CD8-positive, alpha-beta T cell (primary cell): ENCODE measurements at regions of chr12 and their contacts with region 1.

Region 1: DNA sequence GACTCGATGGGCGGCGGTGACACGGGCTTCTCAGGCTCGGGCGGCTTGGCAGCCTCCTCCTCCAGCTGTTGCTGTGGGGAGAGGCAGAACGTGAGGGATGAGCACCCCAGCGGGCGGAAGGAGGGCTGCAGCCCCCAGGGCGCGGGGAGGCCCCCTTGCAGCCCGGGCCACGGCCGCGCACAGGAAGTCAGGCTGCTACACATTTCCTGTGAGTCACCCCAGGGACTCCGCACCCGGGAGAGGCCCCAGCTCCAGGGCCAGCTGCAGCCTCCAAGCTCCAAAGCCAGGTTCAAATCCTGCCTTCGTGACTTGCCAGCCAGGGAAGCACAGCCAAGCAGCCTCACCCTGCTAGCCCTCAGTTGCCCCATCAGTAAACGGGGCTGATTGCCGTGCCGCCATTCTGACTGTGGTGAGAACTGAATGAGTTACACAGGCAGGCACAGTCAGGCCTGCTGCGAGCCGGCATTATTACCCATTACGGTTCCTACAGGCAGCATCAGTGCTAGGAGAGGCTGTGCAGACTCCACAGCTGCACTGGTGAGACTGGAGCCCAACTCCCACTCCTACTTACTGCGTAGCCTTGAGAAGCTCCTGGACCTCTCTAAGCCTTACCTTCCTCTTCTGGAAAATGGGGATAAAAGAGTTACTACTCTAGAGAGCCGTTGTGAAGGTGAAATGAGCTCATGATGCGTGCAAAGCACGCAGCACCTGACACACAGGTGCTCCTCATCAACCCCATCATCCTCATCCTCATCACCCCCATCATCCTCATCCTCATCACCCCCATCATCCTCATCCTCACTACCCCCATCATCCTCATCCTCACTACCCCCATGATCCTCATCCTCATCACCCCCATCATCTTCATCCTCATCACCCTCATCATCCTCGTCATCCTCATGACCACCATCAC is 100.9 kb downstream of the NCOR2 start:
- DNase-seq: peak; percentile 81 to 96 (median 90)
- ATAC-seq: peak; percentile 95
- H3K4me3 ChIP-seq: peak overlapping the region; percentile 62 to 64
- H3K4me3 Mint-ChIP-seq: peak overlapping the region; percentile 78
- H3K27ac ChIP-seq: peak overlapping the region; percentile 49 to 85
- H3K27ac Mint-ChIP-seq: peak overlapping the region; percentile 91
- H3K4me1 ChIP-seq: peaks cover 25% of the 10 kb centered on the region
- H3K4me1 Mint-ChIP-seq: peaks cover 47% of the 10 kb centered on the region
- H3K27me3 ChIP-seq: no peaks in the 10 kb centered on the region
- H3K27me3 Mint-ChIP-seq: no peaks in the 10 kb centered on the region
- CTCF ChIP-seq: peak; percentile 68

Region 2: DNA sequence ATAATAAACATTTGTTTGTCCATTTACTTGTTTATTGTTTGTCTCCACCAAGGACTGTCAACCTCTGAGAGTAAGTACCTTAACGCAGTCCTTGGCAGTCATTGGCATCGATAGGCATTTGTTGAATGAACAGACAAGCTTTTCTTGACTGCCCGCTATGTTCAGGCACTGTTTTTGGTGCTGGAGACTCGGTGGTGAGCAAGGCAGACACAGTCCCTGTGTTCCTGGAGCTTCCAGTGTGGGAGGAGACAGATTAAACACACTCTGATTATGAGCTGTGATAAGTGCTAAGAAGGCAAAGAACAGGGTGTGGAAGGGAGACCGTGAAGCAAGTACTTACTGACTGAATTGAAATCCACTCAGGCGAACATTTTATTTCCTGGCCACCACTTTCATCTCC is 753.1 kb before region 1 on chr12:
- CTCF ChIA-PET with region 1: no interaction called
- POLR2A ChIA-PET with region 1: no interaction called
- intact Hi-C with region 1: loop called in 1 of 2 experiments (anchors 5 kb)
- DNase-seq: peak in 1 of 9 experiments; percentile 21
- ATAC-seq: no peak
- H3K4me3 ChIP-seq: peak overlapping the region; percentile 69 to 98
- H3K4me3 Mint-ChIP-seq: peak overlapping the region; percentile 84
- H3K27ac ChIP-seq: no peak overlapping the region
- H3K27ac Mint-ChIP-seq: peak overlapping the region; percentile 86
- H3K4me1 ChIP-seq: peaks cover 22% of the 10 kb centered on the region
- H3K4me1 Mint-ChIP-seq: peaks cover 45% of the 10 kb centered on the region
- H3K27me3 ChIP-seq: no peaks in the 10 kb centered on the region
- H3K27me3 Mint-ChIP-seq: no peaks in the 10 kb centered on the region
- CTCF ChIP-seq: no peak

Region 3: GRCh38 chr12:124036674-124037109 is 429.8 kb before region 1 on chr12:
- CTCF ChIA-PET with region 1: interaction called, 3 read pairs
- POLR2A ChIA-PET with region 1: no interaction called
- intact Hi-C with region 1: loop called in 1 of 2 experiments (anchors 2 kb)
- DNase-seq: peak in 7 of 9 experiments; percentile 20 to 69 (median 52)
- ATAC-seq: no peak
- H3K4me3 ChIP-seq: no peak overlapping the region
- H3K4me3 Mint-ChIP-seq: no peak overlapping the region
- H3K27ac ChIP-seq: no peak overlapping the region
- H3K27ac Mint-ChIP-seq: no peak overlapping the region
- H3K4me1 ChIP-seq: no peaks in the 10 kb centered on the region
- H3K4me1 Mint-ChIP-seq: no peaks in the 10 kb centered on the region
- H3K27me3 ChIP-seq: no peaks in the 10 kb centered on the region
- H3K27me3 Mint-ChIP-seq: no peaks in the 10 kb centered on the region
- CTCF ChIP-seq: peak; percentile 99

Region 4: GRCh38 chr12:124453419-124454351 is 12.8 kb before region 1 on chr12:
- CTCF ChIA-PET with region 1: interaction called, 26 read pairs
- POLR2A ChIA-PET with region 1: interaction called, 20 read pairs
- intact Hi-C with region 1: loop called (anchors 1 kb)
- DNase-seq: peak; percentile 64 to 95 (median 84)
- ATAC-seq: peak; percentile 78
- H3K4me3 ChIP-seq: peak overlapping the region; percentile 29 to 57
- H3K4me3 Mint-ChIP-seq: peak overlapping the region; percentile 67
- H3K27ac ChIP-seq: peak overlapping the region; percentile 41 to 92
- H3K27ac Mint-ChIP-seq: peak overlapping the region; percentile 82
- H3K4me1 ChIP-seq: peaks cover 82% of the 10 kb centered on the region
- H3K4me1 Mint-ChIP-seq: peaks cover 67% of the 10 kb centered on the region
- H3K27me3 ChIP-seq: no peaks in the 10 kb centered on the region
- H3K27me3 Mint-ChIP-seq: no peaks in the 10 kb centered on the region
- CTCF ChIP-seq: no peak

Region 5: DNA sequence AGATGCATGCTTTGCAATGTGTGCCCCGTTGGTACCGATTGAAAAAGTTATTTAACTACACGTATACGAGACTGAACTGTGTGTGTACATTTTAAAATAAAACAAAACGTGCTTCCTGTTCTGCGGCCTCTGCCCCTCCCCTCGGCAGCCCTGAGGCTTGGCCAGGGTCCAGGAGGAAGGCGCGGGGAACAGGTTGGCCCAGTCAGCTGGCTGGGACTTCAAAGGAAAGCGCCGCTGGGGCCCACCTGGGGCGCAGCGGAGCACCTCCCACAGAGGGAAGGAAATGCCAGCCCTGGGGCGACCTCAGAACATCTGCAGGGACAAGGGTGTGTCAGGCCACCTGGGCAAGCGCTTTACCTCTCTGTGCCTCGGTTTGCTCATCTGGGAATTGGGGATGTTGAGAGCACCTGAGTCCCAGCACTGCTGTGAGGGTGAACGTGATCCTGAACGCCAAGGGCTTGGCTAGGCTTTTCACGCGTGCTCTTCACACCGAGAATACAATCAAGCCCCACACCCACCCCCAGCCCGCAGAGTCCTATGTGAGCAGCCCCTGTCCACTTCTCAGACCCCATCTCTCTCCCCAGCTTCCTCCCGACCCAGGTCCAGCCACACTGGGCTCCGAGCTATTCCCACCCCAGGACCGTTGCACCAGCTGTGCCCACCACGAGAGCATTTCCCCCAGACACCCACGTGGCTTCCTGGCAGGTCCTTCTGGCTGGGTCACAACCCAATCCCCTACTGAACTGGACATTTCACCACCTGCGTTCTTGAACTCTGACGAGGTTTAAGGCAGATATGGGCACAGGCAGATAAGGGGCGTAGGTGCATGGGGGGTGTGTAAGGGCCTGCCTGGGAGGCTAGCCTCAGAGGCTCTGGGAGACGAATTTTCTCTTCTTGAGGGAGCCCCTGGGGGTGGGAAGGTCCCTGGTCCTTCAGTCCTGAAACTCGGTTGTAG is 142.8 kb after region 1 on chr12:
- CTCF ChIA-PET with region 1: interaction called, 3 read pairs
- POLR2A ChIA-PET with region 1: no interaction called
- intact Hi-C with region 1: loop called in 1 of 2 experiments (anchors 5 kb)
- DNase-seq: peak; percentile 77 to 95 (median 90)
- ATAC-seq: peak; percentile 93
- H3K4me3 ChIP-seq: peak overlapping the region in 1 of 2 experiments; percentile 21
- H3K4me3 Mint-ChIP-seq: peak overlapping the region; percentile 82
- H3K27ac ChIP-seq: no peak overlapping the region
- H3K27ac Mint-ChIP-seq: peak overlapping the region; percentile 76
- H3K4me1 ChIP-seq: peaks cover 30% of the 10 kb centered on the region
- H3K4me1 Mint-ChIP-seq: peaks cover 37% of the 10 kb centered on the region
- H3K27me3 ChIP-seq: no peaks in the 10 kb centered on the region
- H3K27me3 Mint-ChIP-seq: no peaks in the 10 kb centered on the region
- CTCF ChIP-seq: no peak

Region 6: GRCh38 chr12:124767066-124767821 is 300.8 kb after region 1 on chr12:
- CTCF ChIA-PET with region 1: no interaction called
- POLR2A ChIA-PET with region 1: no interaction called
- intact Hi-C with region 1: loop called in 1 of 2 experiments (anchors 5 kb)
- DNase-seq: peak; percentile 72 to 94 (median 83)
- ATAC-seq: peak; percentile 89
- H3K4me3 ChIP-seq: no peak overlapping the region
- H3K4me3 Mint-ChIP-seq: no peak overlapping the region
- H3K27ac ChIP-seq: no peak overlapping the region
- H3K27ac Mint-ChIP-seq: peak overlapping the region; percentile 24
- H3K4me1 ChIP-seq: peaks cover 8% of the 10 kb centered on the region
- H3K4me1 Mint-ChIP-seq: peaks cover 23% of the 10 kb centered on the region
- H3K27me3 ChIP-seq: peaks cover 1 to 3% of the 10 kb centered on the region in 2 experiments
- H3K27me3 Mint-ChIP-seq: peaks cover 4% of the 10 kb centered on the region
- CTCF ChIP-seq: peak; percentile 99